ENCODE measurements at regions of chr11 and their contacts with region 1.

Region 1: DNA sequence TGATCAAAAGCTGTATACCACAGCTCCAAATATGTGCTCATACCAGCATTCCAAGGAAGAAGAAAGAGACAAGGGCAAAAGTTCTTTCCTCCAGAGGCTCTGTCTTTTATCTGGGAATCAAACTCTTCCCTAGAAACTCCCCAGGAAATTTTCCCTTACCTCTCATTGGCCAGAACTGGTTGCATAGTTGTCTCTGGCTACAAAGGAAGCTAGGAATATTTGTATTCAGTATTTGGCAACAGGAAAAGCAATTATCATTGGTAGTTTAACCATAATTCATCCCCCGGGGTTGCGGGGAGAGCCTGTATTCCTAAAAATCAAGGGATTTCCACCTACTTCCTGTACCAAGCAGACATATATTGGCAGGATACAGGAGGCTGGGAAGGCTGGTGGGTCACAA is 10.5 kb upstream of the ZFTA start:
- DNase-seq: no peak
- ATAC-seq: no peak
- H3K4me3 Mint-ChIP-seq: no peak overlapping the region
- H3K27ac Mint-ChIP-seq: no peak overlapping the region
- H3K4me1 Mint-ChIP-seq: no peaks in the 10 kb centered on the region
- H3K27me3 Mint-ChIP-seq: peaks cover 2% of the 10 kb centered on the region
- CTCF ChIP-seq: no peak

Region 2: DNA sequence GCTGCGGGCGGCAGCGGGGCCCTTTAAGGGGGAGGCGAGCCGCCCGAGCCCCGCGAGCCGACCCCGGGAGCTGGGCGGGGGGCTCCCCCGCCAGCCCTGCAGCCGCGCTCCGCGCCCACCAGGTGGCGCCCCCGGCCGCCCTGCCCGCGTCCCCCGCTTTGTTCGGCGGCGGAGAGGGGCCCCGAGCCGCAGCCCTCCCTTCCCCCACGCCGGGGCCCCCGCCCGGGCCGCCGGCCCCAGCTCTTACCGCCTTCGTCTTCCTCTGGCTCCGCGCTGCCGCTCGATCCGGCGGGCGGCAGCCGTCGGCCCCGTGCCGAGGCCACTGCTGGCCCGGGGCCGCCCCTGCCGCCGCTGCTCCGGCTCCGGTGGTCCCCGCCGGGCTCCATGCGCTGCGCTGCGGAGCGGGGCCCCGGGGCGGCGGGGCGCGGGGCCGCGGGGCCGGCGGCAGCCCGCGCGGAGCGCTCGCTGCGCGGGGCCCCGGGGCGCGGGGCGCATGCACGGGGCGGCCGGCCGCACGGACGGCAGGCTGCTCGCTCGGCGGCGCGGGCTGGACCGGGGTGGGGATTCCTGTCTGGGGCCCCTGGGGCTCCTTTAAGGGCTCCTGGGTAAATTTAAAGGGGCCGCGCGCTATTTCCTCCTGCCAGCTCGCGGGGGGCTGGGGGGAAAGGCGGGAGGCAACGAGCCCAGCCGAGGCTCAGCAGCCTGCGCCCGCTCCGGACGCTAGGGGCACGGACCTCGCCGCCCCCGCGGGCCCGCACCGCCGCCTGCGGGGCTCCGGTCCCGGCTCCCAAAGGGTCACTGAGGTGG is 10.6 kb before region 1 on chr11 and contains the start of gene ZFTA:
- CTCF ChIA-PET with region 1: interaction called, 10 read pairs
- POLR2A ChIA-PET with region 1: no interaction called
- intact Hi-C with region 1: no loop called
- DNase-seq: peak; percentile 71
- ATAC-seq: peak; percentile 72
- H3K4me3 Mint-ChIP-seq: peak within 1 kb of the TSS; percentile 82
- H3K27ac Mint-ChIP-seq: peak within 1 kb of the TSS; percentile 44
- H3K4me1 Mint-ChIP-seq: peaks cover 10% of the 10 kb centered on the region
- H3K27me3 Mint-ChIP-seq: peaks cover 8% of the 10 kb centered on the region
- CTCF ChIP-seq: peak; percentile 72
- total RNA-seq, gene ZFTA: 4.1 to 4.3 TPM

Measured in activated CD8-positive, alpha-beta T cell treated with anti-CD3 and anti-CD28 coated beads for 36 hours (primary cell).